HEK293 (cell line): ENCODE measurements at regions of chr1 and their contacts with region 1.

Region 1: GRCh38 chr1:101288491-101288944 is 51.7 kb downstream of the S1PR1 start:
- H3K4me3 ChIP-seq: no peak overlapping the region
- H3K27ac ChIP-seq: no peak overlapping the region
- H3K4me1 ChIP-seq: peaks cover 16% of the 10 kb centered on the region
- CTCF ChIP-seq: peak; percentile 88

Region 2: GRCh38 chr1:100866041-100866900 is 422.2 kb before region 1 on chr1:
- CTCF ChIA-PET with region 1: interaction called, 12 read pairs
- POLR2A ChIA-PET with region 1: no interaction called
- H3K4me3 ChIP-seq: no peak overlapping the region
- H3K27ac ChIP-seq: no peak overlapping the region
- H3K4me1 ChIP-seq: no peaks in the 10 kb centered on the region
- CTCF ChIP-seq: peak; percentile 38; the same call in 1 of the 2 replicates

Region 3: GRCh38 chr1:100921109-100921706 is 367.3 kb before region 1 on chr1:
- CTCF ChIA-PET with region 1: interaction called, 24 read pairs
- POLR2A ChIA-PET with region 1: no interaction called
- H3K4me3 ChIP-seq: no peak overlapping the region
- H3K27ac ChIP-seq: no peak overlapping the region
- H3K4me1 ChIP-seq: no peaks in the 10 kb centered on the region
- CTCF ChIP-seq: 0 out of 2 replicates have a peak, but pooled peaks have one; percentile 8

Region 4: GRCh38 chr1:101136739-101137138 is 151.8 kb before region 1 on chr1:
- CTCF ChIA-PET with region 1: interaction called, 67 read pairs
- POLR2A ChIA-PET with region 1: interaction called, 4 read pairs
- H3K4me3 ChIP-seq: no peak overlapping the region
- H3K27ac ChIP-seq: no peak overlapping the region
- H3K4me1 ChIP-seq: peaks cover 8% of the 10 kb centered on the region
- CTCF ChIP-seq: peak; percentile 59; the same call in 1 of the 2 replicates

Region 5: GRCh38 chr1:101238681-101239094 is 49.8 kb before region 1 on chr1:
- CTCF ChIA-PET with region 1: interaction called, 58 read pairs
- POLR2A ChIA-PET with region 1: interaction called, 8 read pairs
- H3K4me3 ChIP-seq: no peak overlapping the region
- H3K27ac ChIP-seq: peak overlapping the region; percentile 21; the same call in 1 of the 2 replicates
- H3K4me1 ChIP-seq: peaks cover 7% of the 10 kb centered on the region; the same call in 1 of the 2 replicates
- CTCF ChIP-seq: peak; percentile 88

Region 6: DNA sequence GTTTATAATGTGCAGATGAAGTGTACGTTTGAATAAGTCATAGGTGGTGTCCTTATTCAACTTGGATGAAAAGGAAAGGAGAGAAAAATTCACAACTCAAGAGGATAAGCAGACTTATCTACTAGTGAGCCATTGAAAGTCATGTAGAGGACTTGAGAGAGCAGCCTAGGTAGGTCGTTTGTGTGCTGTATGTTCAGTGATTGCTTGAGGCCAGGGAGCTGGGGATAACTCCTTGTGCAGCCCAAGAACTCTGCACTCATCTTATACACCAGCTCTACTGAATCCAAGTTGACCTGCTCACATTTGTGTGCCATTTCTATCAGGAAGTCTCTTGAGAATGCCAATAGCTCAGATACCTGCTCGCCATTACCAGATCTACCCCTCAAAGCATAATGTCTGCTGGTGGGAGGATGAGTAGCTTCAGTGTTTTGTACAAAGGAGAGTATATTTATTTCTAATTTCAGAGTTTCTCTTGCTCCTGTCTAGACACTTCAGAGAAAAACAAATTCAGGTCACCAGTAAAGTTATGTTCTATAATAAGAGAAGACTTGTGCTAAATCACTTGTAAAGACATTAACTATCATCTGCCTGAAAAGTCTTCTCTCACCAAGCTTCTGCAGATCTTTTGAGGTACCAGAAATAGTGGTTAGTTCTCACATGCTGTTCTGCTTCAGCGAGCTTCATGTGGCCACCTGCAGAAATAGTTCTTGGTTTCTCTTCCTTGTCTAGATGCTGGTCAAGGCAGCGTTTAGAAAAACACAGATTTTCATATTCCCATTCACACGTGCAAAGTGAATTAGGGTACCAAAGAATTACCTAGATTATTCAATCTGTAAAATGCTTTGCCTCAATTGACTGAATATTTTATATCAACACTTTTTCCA is 40.9 kb before region 1 on chr1:
- CTCF ChIA-PET with region 1: interaction called, 20 read pairs
- POLR2A ChIA-PET with region 1: no interaction called
- H3K4me3 ChIP-seq: no peak overlapping the region
- H3K27ac ChIP-seq: no peak overlapping the region
- H3K4me1 ChIP-seq: peaks cover 9% of the 10 kb centered on the region
- CTCF ChIP-seq: no peak

Region 7: GRCh38 chr1:101309334-101310311 is 21.1 kb after region 1 on chr1:
- CTCF ChIA-PET with region 1: interaction called, 12 read pairs
- POLR2A ChIA-PET with region 1: no interaction called
- H3K4me3 ChIP-seq: no peak overlapping the region
- H3K27ac ChIP-seq: no peak overlapping the region
- H3K4me1 ChIP-seq: no peaks in the 10 kb centered on the region
- CTCF ChIP-seq: peak; percentile 31

Region 8: DNA sequence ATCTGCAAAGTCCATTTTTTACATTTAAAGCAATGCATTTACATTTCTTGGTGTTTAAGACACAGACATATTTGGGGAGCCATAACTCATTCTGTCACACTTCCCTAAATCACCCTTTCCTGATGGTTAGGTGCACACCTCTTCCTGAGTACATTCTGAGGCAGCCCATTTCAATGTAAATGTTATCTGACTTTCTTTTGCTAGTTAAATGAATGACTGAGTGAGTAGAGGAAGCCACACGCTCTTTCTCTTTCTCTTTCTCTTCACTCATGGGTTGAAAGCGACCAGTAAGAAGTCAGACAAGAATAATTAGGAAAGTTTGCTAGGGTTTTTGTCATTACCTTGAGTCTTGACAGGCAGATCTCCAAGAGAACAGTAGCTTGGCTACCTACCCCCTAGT is 91.4 kb after region 1 on chr1:
- CTCF ChIA-PET with region 1: no interaction called
- POLR2A ChIA-PET with region 1: no interaction called
- H3K4me3 ChIP-seq: no peak overlapping the region
- H3K27ac ChIP-seq: no peak overlapping the region
- H3K4me1 ChIP-seq: no peaks in the 10 kb centered on the region
- CTCF ChIP-seq: no peak

Region 9: DNA sequence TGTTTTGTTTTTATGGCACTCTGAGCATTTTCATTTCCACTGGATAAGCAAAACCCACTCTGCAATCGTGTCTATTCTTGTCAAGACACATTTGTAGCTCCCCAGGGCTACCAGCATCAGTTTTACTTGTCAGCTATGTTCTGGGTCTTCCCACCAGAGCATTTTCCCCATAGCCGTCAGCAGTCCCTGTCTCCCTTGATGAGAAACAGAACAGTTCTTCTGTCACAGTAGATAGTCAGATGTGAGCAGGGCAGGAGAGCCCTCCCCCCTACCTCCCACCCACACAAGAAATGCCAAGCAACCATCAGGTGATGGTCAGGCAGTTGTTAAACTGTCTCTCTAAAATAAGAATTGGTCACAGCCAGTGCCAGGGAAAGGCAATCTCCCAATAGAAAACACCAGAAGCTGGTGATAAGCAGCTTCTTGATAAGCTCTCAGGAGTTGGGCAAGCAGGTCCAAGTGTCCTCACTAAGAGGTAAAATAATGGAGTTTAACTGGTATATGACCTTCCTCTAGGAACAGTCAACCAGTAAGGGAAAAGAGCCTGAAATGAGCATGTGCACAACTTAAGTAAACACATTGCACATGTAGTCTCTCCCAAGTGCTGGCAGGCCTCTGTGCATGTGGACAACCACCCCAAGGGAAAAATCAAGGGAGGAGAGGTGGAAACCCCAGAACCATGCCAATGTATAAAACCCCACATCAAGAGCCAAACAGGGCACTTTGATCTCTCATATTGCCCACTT is 156.5 kb after region 1 on chr1:
- CTCF ChIA-PET with region 1: no interaction called
- POLR2A ChIA-PET with region 1: no interaction called
- H3K4me3 ChIP-seq: no peak overlapping the region
- H3K27ac ChIP-seq: no peak overlapping the region
- H3K4me1 ChIP-seq: no peaks in the 10 kb centered on the region
- CTCF ChIP-seq: no peak